ENCODE measurements at regions of chr5 and their contacts with region 1.

Region 1: GRCh38 chr5:149389552-149390495 is 10.7 kb upstream of the IL17B start:
- DNase-seq: no peak
- H3K4me3 ChIP-seq: no peak overlapping the region
- H3K27ac ChIP-seq: no peak overlapping the region
- H3K4me1 ChIP-seq: peaks cover 0 to 8% (median 6%) of the 10 kb centered on the region in 4 experiments
- H3K27me3 ChIP-seq: no peaks in the 10 kb centered on the region

Region 2: DNA sequence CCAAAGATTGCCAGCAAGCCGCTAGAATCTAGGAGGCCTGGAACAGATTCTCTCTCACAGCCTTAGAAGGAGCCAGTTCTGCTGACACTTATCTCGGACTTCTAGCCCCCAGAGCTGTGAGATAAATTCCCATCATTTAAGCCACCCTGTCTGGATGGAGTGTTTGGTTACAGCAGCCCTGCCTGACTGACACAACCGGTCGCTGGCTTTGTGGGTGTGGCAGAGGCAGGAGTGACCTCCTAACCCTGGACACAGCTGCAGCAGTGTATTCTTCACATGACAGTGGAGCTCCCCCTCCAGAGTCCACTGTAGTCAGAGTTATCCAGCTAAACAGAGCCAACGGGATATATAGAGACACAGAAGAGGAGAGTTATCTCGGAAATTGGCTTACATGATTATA is 10.5 kb after region 1 on chr5:
- CTCF ChIA-PET with region 1: interaction called, 10 read pairs
- POLR2A ChIA-PET with region 1: no interaction called
- DNase-seq: no peak
- H3K4me3 ChIP-seq: no peak overlapping the region
- H3K27ac ChIP-seq: no peak overlapping the region
- H3K4me1 ChIP-seq: no peaks in the 10 kb centered on the region
- H3K27me3 ChIP-seq: no peaks in the 10 kb centered on the region

Measured in common myeloid progenitor, CD34-positive (primary cell).